ENCODE measurements at regions of chr15 and their contacts with region 1.

Region 1: GRCh38 chr15:36965570-36966342 is 134.6 kb downstream of the MEIS2 start:
- DNase-seq: no peak
- ATAC-seq: peak; percentile 40

Region 2: GRCh38 chr15:36925653-36926426 is 39.9 kb before region 1 on chr15:
- intact Hi-C with region 1: loop called (anchors 5 kb)
- DNase-seq: no peak
- ATAC-seq: no peak

Region 3: DNA sequence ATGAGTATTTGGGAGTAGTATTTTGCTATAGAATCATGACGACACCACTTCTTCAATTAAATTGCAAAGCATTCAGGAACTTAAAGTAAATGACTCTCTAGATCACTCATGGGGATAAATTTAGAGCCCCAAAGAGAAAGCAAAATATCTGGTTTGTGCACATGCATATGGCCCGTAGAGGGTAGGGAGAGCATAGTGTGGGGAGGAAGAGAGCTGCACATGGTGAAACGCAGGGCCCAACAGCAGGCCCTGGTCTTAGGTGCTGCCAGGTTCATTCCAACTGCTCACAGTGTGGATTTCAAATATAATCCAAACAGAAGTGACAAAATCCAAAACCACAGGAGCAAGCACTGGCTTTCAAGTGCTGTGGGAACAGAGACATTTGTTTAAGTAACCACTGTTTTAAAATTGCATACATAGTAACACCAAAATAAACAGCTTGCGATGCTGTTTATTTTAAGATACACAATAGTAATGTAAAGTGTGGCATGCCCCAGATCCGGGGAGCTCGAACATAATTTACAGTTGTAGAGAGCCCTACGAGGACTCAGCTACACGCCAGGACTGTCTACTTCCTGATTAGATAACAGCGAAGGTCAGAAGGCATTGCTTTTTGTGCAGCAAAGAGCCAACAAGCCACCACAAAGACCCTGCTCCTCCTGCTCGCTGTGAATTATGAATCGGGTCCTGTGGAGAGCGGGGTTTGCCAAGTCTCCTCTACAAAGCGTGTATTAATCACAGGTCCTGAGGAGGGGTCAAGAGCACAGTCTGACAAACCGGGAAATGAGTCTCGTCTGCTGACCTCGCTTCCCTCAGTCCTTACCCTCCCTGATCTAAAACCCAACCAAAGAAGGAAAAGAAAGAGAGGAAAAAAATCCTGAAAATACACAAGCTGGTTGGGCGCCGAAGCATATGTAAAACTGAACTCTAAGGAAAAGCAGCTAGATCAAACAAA is 54.0 kb after region 1 on chr15:
- intact Hi-C with region 1: no loop called
- DNase-seq: no peak
- ATAC-seq: peak; percentile 74